ENCODE measurements at regions of chr11 and their contacts with region 1.

Region 1: DNA sequence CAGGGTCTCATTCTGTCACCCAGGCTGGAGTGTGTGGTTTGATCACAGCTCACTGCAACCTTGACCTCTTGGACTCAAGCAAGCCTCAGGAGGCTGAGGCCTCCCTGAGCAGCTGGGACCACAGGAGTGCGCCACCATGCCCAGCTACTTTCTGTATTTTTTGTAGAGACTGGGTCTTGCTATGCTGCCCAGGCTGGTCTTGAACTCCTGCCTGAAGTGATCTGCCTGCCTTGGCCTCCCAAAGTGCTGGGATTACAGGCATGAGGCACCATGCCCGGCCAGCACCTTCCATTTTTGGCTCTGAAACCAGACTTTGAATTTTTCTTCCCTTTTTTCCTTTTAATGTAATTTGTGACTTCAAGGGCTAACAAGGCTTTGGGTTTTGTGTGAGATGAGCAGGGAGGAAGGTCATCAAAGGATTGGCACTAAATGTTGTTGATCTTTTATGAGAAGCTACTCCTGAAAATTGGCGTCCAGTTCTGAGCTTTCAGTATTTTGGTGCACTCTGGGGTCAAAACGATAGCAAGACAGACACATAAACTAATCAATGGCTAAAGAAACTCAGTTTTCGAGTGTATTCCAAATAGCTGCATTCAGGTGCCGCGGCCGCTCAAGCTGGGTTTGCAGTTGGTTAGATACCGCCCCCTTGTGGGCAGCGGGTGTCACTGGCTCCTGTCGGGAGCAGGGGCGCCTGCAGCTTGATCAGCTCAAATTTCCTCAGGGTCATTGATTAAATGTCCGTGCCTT is 51.9 kb upstream of the CLMP start:
- DNase-seq: peak; percentile 76 to 92 (median 84)
- ATAC-seq: peak; percentile 96
- H3K4me3 ChIP-seq: no peak overlapping the region
- H3K27ac ChIP-seq: no peak overlapping the region
- H3K4me1 ChIP-seq: no peaks in the 10 kb centered on the region
- H3K27me3 ChIP-seq: no peaks in the 10 kb centered on the region
- CTCF ChIP-seq: peak; percentile 92 to 96

Region 2: DNA sequence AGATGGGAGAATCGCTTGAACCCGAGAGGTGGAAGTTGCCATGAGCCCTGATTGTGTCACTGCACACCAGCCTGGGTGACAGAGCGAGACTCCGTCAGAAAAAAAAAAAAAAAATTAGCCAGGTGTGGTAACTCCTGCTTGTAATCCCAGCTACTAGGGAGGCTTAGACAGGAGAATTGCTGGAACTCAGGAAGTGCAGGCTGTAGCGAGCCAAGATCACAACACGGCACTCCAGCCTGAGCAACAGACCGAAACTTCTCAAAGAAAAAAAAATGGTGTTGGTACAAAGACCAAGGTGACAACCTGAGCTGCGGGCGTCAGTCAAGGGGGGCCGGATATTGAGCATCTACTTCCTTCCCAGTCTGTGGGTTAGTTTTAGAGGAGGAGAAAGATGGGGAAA is 136.6 kb before region 1 on chr11:
- intact Hi-C with region 1: loop called in 1 of 2 experiments (anchors 5 kb)
- DNase-seq: no peak
- ATAC-seq: no peak
- H3K4me3 ChIP-seq: no peak overlapping the region
- H3K27ac ChIP-seq: no peak overlapping the region
- H3K4me1 ChIP-seq: peaks cover 0 to 2% of the 10 kb centered on the region in 2 donors
- H3K27me3 ChIP-seq: no peaks in the 10 kb centered on the region
- CTCF ChIP-seq: no peak